Left cardiac atrium (tissue), 4 donors: ENCODE measurements at regions of chr22 and their contacts with region 1.

Region 1: DNA sequence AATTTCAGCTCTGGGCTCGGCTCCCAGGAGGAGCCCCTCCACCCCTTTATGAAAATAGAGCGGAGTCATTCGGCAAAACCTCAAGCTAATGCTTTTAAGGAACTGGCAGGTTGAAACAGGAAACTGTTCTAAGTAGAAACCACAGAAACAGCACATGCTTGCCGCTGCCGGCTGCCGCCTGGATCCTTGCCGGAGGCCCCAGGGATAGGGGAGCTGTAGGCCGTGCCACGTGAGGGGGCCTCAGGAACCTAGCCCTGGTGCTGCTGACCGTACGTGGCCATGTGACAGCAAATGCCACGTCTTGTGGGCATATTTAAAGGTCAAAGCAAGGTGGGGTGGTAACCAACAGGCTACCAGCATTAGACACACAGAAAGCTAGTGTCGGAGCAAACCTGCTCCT is 77.9 kb upstream of the TIMP3 start:
- DNase-seq: peak; percentile 73
- ATAC-seq: peak; percentile 86 to 89

Region 2: DNA sequence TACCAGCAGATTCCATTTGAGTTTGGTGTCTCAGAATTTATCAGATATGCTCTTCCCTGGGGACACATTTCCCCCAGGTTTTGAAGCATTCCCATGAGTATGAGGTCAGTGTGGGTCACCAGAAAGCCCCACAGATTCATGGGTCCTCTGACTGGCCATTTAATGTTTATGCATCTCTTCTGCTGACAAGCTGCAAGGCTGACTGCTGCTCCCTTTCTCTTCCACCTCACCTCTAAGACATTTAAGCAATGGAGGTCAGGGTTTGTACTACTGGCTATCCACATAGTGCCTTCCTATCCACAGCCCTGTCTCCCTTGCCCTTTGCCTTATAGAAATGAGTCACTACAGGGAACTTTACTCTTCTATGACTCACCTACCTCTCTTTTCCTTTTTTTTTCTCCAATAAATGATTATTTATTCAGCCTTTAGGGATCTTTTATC is 28.2 kb before region 1 on chr22:
- intact Hi-C with region 1: no loop called
- DNase-seq: no peak
- ATAC-seq: no peak

Region 3: GRCh38 chr22:32764330-32765131 is 40.9 kb after region 1 on chr22:
- intact Hi-C with region 1: no loop called
- DNase-seq: peak; percentile 65
- ATAC-seq: peak; percentile 77 to 84

Region 4: GRCh38 chr22:32775957-32776356 is 52.3 kb after region 1 on chr22:
- intact Hi-C with region 1: loop called in 1 of 2 experiments (anchors 10 kb)
- DNase-seq: no peak
- ATAC-seq: no peak

Region 5: GRCh38 chr22:32957200-32957803 is 233.7 kb after region 1 on chr22:
- intact Hi-C with region 1: no loop called
- DNase-seq: no peak
- ATAC-seq: peak; percentile 20 to 27